Activated B cell treated with CpG ODN at 0.5 μM for 24 hours (primary cell): ENCODE measurements at regions of chr16 and their contacts with region 1.

Region 1: DNA sequence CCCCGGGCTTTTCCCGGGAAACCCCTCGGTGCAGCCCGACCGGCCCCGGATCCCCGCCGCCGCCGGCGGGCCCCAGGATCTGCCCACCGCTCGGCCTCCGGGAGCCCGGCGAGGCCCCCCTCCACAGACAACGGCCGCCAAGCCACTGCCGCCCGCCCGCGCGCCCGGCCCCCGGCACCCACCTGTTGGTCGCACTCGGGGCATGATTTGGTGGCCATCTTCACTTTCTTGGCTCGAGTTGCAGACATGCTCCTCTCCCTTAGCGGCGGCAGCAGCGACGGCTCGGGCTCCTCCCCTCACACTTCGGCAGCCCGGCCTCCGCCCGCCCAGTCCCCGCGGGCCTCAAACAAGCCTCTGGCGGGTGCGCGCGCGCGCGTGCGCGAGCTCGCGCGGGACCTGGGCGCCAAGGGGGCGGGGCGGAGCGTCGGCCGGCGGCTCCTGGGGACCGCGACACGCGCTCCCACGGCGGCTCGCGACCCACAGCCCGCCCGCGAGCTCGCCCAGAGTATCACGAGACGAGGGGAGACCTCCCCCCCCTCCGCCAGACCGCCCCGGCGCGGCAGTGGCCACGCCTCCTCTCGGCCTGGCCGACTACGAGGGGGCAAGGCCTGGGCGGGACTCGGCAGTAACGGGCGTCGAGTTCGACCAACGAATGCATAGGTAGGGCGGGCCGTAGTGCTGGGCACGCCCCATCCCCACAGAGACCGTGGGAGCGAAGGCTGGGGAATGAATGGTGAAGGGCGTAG is at the start of gene C16orf87:
- DNase-seq: peak; percentile 90
- ATAC-seq: peak; percentile 92
- H3K4me3 Mint-ChIP-seq: peak within 1 kb of the TSS; percentile 99
- H3K27ac Mint-ChIP-seq: peak within 1 kb of the TSS; percentile 95
- H3K4me1 Mint-ChIP-seq: peaks cover 68% of the 10 kb centered on the region
- H3K27me3 Mint-ChIP-seq: no peaks in the 10 kb centered on the region
- CTCF ChIP-seq: no peak
- total RNA-seq, gene C16orf87: 15.6 and 16.6 TPM in 2 replicates

Region 2: GRCh38 chr16:46808997-46809396 is 22.1 kb before region 1 on chr16:
- CTCF ChIA-PET with region 1: no interaction called
- POLR2A ChIA-PET with region 1: interaction called, 9 read pairs
- intact Hi-C with region 1: loop called (anchors 2 kb)
- DNase-seq: no peak
- ATAC-seq: peak; percentile 92
- H3K4me3 Mint-ChIP-seq: no peak overlapping the region
- H3K27ac Mint-ChIP-seq: no peak overlapping the region
- H3K4me1 Mint-ChIP-seq: peaks cover 16% of the 10 kb centered on the region
- H3K27me3 Mint-ChIP-seq: no peaks in the 10 kb centered on the region
- CTCF ChIP-seq: no peak

Region 3: DNA sequence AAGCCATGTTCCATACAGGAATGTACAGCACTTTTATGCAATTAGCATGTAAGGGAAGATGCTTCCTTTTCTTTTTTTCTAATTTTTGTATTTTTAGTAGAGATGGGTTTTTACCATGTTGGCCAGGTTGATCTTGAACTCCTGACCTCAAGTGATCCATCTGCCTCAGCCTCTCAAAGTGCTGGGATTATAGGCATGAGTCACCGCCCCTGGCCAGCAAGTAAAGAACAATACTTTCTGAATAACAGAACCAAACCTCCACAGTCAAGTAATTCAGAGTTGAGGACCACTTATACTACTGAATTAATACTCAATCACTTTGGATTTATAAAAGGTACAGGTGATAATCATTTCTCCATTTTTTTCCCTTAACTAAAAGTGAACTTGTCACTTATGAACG is 13.1 kb before region 1 on chr16:
- CTCF ChIA-PET with region 1: no interaction called
- POLR2A ChIA-PET with region 1: interaction called, 13 read pairs
- intact Hi-C with region 1: no loop called
- DNase-seq: no peak
- ATAC-seq: no peak
- H3K4me3 Mint-ChIP-seq: no peak overlapping the region
- H3K27ac Mint-ChIP-seq: no peak overlapping the region
- H3K4me1 Mint-ChIP-seq: peaks cover 34% of the 10 kb centered on the region
- H3K27me3 Mint-ChIP-seq: no peaks in the 10 kb centered on the region
- CTCF ChIP-seq: no peak

Region 4: GRCh38 chr16:46883690-46884512 is 52.8 kb after region 1 on chr16 and contains the start of gene GPT2:
- CTCF ChIA-PET with region 1: no interaction called
- POLR2A ChIA-PET with region 1: interaction called, 4 read pairs
- intact Hi-C with region 1: loop called (anchors 1 kb)
- DNase-seq: peak; percentile 85
- ATAC-seq: peak; percentile 95
- H3K4me3 Mint-ChIP-seq: peak within 1 kb of the TSS; percentile 89
- H3K27ac Mint-ChIP-seq: peak within 1 kb of the TSS; percentile 85
- H3K4me1 Mint-ChIP-seq: peaks cover 11% of the 10 kb centered on the region
- H3K27me3 Mint-ChIP-seq: peaks cover 2% of the 10 kb centered on the region
- CTCF ChIP-seq: no peak
- total RNA-seq, gene GPT2: 11.7 and 17.4 TPM in 2 replicates

Region 5: DNA sequence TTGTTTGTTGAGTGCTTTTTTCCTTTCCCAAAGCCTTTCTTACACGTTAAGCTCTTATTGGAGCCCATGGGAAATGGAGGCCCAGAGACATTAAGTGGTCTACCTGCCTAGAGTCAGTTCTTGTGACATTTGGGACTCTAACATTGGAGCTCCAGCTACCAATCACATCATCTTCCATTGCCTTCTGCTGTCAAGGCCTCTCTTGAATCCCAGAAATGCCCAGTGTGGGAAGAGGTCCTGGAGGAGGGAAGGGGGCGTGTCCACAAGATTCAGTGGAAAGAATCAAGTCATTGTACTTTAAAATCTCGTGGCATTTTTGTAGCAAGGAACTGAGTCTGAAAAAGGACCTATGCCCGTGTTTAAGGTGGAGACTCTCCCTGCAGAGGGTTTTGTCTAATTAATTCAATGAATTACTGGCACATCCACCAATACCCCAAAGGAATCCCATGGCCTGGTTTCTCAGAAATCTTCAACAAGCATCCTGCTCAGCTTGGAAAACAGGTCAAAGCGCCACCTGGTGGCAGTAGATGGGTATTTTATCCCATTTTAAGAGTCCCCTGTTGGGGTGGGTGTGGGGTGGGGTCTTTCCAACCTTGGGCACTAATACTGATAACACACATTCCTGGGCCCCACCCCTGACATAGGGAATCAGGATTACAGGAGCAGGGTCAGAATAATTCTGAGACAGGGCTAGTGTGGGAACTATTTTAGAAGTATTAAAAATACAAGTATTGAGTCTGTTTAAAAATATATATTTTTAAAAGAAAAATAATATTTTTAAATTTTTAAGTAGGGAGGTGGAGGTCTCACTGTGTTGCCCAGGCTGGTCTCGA is 77.7 kb after region 1 on chr16:
- CTCF ChIA-PET with region 1: no interaction called
- POLR2A ChIA-PET with region 1: no interaction called
- intact Hi-C with region 1: no loop called
- DNase-seq: peak; percentile 33
- ATAC-seq: peak; percentile 30
- H3K4me3 Mint-ChIP-seq: no peak overlapping the region
- H3K27ac Mint-ChIP-seq: no peak overlapping the region
- H3K4me1 Mint-ChIP-seq: peaks cover 56% of the 10 kb centered on the region
- H3K27me3 Mint-ChIP-seq: no peaks in the 10 kb centered on the region
- CTCF ChIP-seq: peak; percentile 77